Activated CD4-positive, alpha-beta memory T cell treated with anti-CD3 and anti-CD28 coated beads for 36 hours (primary cell): ENCODE measurements at regions of chr2 and their contacts with region 1.

Region 1: DNA sequence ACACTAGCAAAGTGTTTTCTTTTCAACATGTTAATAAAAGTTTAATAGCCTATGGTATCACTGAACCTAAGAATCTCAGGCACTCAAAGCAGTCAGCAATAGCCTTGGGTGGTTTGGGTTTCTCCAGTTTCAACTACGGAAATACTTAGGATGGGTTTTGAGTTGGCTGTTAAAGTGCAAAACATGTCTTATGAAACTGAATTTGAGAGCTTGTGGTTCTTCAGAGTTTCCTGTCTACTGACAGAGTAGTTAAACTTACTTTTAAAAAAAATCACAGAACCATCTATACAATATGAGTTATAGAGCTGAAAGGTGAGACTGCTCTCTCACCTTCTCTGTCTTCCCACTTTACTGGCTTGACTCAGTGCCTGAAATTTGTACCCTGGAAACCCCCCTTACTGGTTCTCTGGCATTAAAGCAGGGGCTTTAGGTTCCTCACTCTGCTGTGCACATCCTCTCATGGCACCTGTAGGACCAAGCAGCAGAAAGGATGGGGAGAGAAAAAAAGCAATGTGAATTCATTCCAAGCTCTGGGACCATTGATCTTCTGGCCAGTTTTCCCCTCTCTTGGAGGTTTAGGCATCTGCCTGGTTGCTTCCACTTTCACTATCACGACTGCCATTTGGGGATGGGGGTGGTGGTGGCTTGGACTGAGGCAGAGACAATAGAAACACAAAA is 18.1 kb downstream of the CCDC141 start:
- DNase-seq: peak; percentile 48
- H3K4me3 Mint-ChIP-seq: peak overlapping the region; percentile 62
- H3K27ac Mint-ChIP-seq: peak overlapping the region; percentile 81
- H3K4me1 Mint-ChIP-seq: peaks cover 16% of the 10 kb centered on the region
- H3K27me3 Mint-ChIP-seq: no peaks in the 10 kb centered on the region

Region 2: DNA sequence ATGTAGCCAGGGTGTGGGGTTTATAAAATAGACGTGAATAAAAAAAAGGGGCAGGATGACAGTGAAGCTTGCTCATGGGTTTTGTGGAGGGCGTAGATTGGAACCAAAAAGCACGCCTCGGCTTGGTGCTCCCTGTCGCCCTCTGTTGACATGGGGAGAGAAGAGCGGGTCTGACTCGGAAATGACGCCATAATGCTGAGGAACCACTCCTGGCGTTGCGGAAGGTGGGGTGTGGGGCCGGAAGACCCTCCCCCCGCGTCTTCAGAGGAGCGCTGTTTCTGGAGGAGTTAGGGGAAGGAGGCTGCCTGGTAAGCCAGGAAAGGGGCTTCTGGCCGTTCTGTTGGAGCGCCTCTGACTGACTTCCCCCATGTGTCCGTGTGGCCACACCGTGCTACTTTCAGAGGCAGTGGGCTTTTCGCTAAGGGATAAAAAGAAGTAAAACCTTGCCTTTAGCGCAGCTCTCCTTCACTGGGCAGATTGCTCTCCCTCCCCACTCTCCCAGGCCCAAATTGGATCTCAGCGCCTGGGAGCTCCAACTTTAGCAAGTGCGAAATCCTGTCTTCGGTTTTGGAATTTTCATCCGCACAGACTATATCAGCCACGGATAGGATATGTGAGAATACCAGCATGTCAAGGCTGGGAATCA is 508.8 kb before region 1 on chr2:
- CTCF ChIA-PET with region 1: no interaction called
- POLR2A ChIA-PET with region 1: no interaction called
- intact Hi-C with region 1: loop called (anchors 5 kb)
- DNase-seq: peak; percentile 92
- H3K4me3 Mint-ChIP-seq: peak overlapping the region; percentile 95
- H3K27ac Mint-ChIP-seq: peak overlapping the region; percentile 91
- H3K4me1 Mint-ChIP-seq: peaks cover 54% of the 10 kb centered on the region
- H3K27me3 Mint-ChIP-seq: no peaks in the 10 kb centered on the region

Region 3: DNA sequence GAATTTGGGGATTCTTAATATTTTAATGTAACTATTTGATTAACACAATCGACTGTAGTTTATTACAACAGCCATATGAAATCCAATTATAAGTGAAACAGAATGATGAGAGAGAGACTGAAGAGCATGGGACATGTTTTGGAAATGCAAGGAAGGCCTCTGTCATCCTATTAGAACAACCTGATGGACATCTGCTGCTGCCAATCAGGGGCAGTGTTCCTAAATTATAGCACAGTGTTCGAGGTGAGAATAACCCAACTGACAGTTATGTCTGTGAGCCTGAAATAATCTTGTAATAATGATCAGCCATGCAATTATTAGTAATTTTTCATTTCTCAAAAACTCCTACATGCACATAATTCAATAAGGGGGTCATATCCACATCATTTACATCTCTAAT is 55.5 kb before region 1 on chr2:
- CTCF ChIA-PET with region 1: no interaction called
- POLR2A ChIA-PET with region 1: no interaction called
- intact Hi-C with region 1: no loop called
- DNase-seq: no peak
- H3K4me3 Mint-ChIP-seq: no peak overlapping the region
- H3K27ac Mint-ChIP-seq: no peak overlapping the region
- H3K4me1 Mint-ChIP-seq: no peaks in the 10 kb centered on the region
- H3K27me3 Mint-ChIP-seq: no peaks in the 10 kb centered on the region

Region 4: GRCh38 chr2:179049546-179050311 is 17.9 kb after region 1 on chr2 and contains the start of gene CCDC141:
- CTCF ChIA-PET with region 1: no interaction called
- POLR2A ChIA-PET with region 1: interaction called, 4 read pairs
- intact Hi-C with region 1: loop called (anchors 1 kb)
- DNase-seq: peak; percentile 17
- H3K4me3 Mint-ChIP-seq: peak within 1 kb of the TSS; percentile 72
- H3K27ac Mint-ChIP-seq: peak within 1 kb of the TSS; percentile 16
- H3K4me1 Mint-ChIP-seq: peaks cover 22% of the 10 kb centered on the region
- H3K27me3 Mint-ChIP-seq: peaks cover 1% of the 10 kb centered on the region
- total RNA-seq, gene CCDC141: 0.93 to 1.3 TPM

Region 5: GRCh38 chr2:179129574-179130238 is 97.8 kb after region 1 on chr2:
- CTCF ChIA-PET with region 1: no interaction called
- POLR2A ChIA-PET with region 1: interaction called, 3 read pairs
- intact Hi-C with region 1: loop called (anchors 5 kb)
- DNase-seq: no peak
- H3K4me3 Mint-ChIP-seq: no peak overlapping the region
- H3K27ac Mint-ChIP-seq: no peak overlapping the region
- H3K4me1 Mint-ChIP-seq: no peaks in the 10 kb centered on the region
- H3K27me3 Mint-ChIP-seq: no peaks in the 10 kb centered on the region

Region 6: DNA sequence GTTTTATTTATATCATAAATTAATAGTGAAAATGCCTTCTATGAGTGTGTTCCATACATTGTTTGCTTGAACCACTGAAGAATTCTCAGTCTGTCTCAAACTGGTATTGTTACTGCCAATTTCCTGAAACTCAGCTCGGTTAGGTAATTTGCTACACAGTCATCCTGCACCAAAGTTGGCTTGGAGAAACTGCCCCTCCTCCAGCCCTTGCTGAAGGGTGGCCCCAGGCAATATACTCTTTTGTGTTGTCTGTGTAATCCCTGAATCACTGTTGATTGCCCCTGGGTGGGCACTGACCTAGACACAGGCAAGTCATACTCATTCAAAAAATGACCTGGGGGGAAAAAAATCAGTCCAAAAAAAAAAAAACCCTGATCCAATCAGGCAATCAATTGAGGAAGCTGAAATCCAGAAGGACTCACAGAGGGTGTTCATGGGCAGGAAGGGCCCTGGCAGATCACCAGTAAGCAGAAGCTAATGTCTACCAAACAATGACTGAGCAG is 236.5 kb after region 1 on chr2:
- CTCF ChIA-PET with region 1: no interaction called
- POLR2A ChIA-PET with region 1: no interaction called
- intact Hi-C with region 1: loop called (anchors 1 kb)
- DNase-seq: peak; percentile 60
- H3K4me3 Mint-ChIP-seq: no peak overlapping the region
- H3K27ac Mint-ChIP-seq: no peak overlapping the region
- H3K4me1 Mint-ChIP-seq: peaks cover 16% of the 10 kb centered on the region
- H3K27me3 Mint-ChIP-seq: peaks cover 28% of the 10 kb centered on the region

Region 7: GRCh38 chr2:179444056-179444455 is 412.2 kb after region 1 on chr2:
- CTCF ChIA-PET with region 1: no interaction called
- POLR2A ChIA-PET with region 1: no interaction called
- intact Hi-C with region 1: no loop called
- DNase-seq: no peak
- H3K4me3 Mint-ChIP-seq: no peak overlapping the region
- H3K27ac Mint-ChIP-seq: no peak overlapping the region
- H3K4me1 Mint-ChIP-seq: no peaks in the 10 kb centered on the region
- H3K27me3 Mint-ChIP-seq: peaks cover 10% of the 10 kb centered on the region